ENCODE measurements at regions of chr1 and their contacts with region 1.

Region 1: GRCh38 chr1:153677718-153678505 is 576 bp upstream of the NPR1 start:
- DNase-seq: peak; percentile 66
- H3K4me3 Mint-ChIP-seq: peak overlapping the region; percentile 73
- H3K27ac Mint-ChIP-seq: no peak overlapping the region
- H3K4me1 Mint-ChIP-seq: peaks cover 7% of the 10 kb centered on the region
- H3K27me3 Mint-ChIP-seq: peaks cover 41% of the 10 kb centered on the region
- CTCF ChIP-seq: peak; percentile 98

Region 2: DNA sequence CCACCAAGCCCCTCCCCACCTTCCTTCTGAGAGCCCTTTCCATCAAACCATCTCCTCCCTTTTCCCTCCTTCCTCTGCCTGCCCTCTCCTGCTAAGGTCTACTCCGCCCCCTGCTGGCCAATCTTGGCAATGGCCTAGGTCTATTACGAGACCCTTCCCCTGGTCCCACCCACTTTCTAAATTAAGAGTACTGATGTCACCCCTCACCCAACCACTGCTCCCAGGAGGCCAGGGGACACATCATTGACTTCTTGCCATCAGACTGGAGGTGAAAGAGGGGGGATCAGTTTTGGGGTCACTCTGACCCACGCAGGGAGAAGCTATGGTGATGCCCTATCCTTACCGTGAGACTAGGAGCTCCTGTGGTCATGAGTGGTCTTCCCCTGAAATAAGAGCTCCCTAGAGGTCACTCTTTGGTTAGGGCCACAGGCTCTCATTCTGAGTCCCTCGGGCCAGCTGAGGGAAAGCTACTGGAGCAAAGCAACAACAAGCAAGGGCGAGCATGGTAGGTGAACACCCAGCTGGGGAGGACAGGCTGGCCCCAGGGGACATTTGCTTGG is 182.9 kb before region 1 on chr1:
- CTCF ChIA-PET with region 1: no interaction called
- POLR2A ChIA-PET with region 1: no interaction called
- intact Hi-C with region 1: no loop called
- DNase-seq: peak; percentile 81
- H3K4me3 Mint-ChIP-seq: no peak overlapping the region
- H3K27ac Mint-ChIP-seq: no peak overlapping the region
- H3K4me1 Mint-ChIP-seq: peaks cover 27% of the 10 kb centered on the region
- H3K27me3 Mint-ChIP-seq: peaks cover 39% of the 10 kb centered on the region
- CTCF ChIP-seq: peak; percentile 99

Region 3: DNA sequence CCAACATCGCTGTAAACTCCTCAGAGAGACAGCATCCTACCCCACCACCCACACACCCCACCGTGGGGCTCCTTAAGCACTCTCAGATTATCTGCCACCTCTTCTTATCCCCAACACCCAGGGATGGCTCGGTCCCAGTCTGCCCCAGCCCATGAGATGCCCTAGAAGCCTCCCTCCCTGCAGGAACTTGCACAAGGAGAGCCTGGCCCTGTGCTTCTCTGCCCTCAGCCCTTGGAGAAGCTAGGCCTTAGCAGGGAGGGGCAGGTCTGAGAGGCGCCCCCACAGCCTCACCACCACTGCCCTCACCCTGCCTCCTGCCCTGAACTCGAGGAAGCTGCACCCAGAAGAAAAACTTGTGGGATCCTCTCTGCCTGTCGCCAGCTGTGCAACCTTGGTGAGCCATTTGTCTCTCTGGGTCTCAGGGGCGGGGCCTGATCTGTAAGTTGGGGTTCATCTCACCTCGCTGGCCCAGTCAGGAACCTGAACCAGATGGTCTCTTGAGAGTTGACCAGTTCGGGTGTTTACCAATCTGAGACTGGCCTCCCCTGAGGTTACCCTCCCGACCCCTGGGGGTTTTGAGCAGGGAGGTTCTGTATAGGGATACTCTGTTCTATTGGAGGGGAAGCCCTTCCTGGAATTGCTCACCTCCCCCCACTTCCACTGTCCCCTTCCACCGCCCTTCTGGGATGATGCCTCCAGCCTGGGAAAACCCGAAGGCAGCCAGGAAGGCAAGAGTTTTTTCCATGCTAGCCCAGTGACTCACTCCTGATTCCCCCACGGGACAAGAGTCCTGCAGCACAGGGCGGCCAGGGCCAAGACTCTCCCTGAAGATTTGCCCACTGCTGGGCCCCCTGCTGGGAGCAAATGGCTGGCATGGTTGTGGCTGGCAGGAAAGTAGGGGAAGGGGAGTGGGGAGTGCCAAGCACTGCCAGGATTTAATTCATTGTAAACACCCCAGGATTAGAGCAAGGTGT is 128.9 kb before region 1 on chr1 and contains the start of gene S100A3:
- CTCF ChIA-PET with region 1: no interaction called
- POLR2A ChIA-PET with region 1: no interaction called
- intact Hi-C with region 1: no loop called
- DNase-seq: peak; percentile 98
- H3K4me3 Mint-ChIP-seq: peak within 1 kb of the TSS; percentile 37
- H3K27ac Mint-ChIP-seq: peak within 1 kb of the TSS; percentile 50
- H3K4me1 Mint-ChIP-seq: peaks cover 56% of the 10 kb centered on the region
- H3K27me3 Mint-ChIP-seq: no peaks in the 10 kb centered on the region
- CTCF ChIP-seq: no peak
- total RNA-seq, gene S100A3: 85.7 and 90.0 TPM in 2 replicates

Region 4: GRCh38 chr1:153688276-153688675 is 10.4 kb after region 1 on chr1:
- CTCF ChIA-PET with region 1: interaction called, 13 read pairs
- POLR2A ChIA-PET with region 1: interaction called, 3 read pairs
- intact Hi-C with region 1: no loop called
- DNase-seq: no peak
- H3K4me3 Mint-ChIP-seq: no peak overlapping the region
- H3K27ac Mint-ChIP-seq: no peak overlapping the region
- H3K4me1 Mint-ChIP-seq: peaks cover 8% of the 10 kb centered on the region
- H3K27me3 Mint-ChIP-seq: peaks cover 14% of the 10 kb centered on the region
- CTCF ChIP-seq: no peak

Region 5: DNA sequence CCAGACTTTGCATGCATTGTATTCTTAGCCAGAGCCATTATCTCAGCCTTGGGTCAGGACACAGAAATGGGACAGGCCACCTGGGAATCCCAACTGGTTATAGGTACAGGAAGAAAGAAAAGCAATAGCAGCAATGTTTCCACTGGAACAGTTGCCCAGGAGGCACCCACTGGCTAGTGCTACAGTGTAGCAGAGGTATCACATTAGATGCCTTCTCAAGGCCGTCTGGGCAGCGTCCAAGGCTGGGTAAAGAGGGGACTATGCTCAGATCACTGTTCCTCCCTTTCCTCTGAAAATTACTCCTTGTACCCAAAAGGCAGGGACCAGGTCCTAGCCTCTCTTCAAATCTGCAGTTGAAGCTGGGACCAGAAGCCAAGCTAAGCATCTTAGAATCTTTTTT is 292.4 kb after region 1 on chr1:
- CTCF ChIA-PET with region 1: no interaction called
- POLR2A ChIA-PET with region 1: no interaction called
- intact Hi-C with region 1: no loop called
- DNase-seq: no peak
- H3K4me3 Mint-ChIP-seq: no peak overlapping the region
- H3K27ac Mint-ChIP-seq: no peak overlapping the region
- H3K4me1 Mint-ChIP-seq: peaks cover 27% of the 10 kb centered on the region
- H3K27me3 Mint-ChIP-seq: no peaks in the 10 kb centered on the region
- CTCF ChIP-seq: no peak

Measured in MCF 10A (cell line).